PC-9 (cell line): ENCODE measurements at regions of chr19 and their contacts with region 1.

Region 1: DNA sequence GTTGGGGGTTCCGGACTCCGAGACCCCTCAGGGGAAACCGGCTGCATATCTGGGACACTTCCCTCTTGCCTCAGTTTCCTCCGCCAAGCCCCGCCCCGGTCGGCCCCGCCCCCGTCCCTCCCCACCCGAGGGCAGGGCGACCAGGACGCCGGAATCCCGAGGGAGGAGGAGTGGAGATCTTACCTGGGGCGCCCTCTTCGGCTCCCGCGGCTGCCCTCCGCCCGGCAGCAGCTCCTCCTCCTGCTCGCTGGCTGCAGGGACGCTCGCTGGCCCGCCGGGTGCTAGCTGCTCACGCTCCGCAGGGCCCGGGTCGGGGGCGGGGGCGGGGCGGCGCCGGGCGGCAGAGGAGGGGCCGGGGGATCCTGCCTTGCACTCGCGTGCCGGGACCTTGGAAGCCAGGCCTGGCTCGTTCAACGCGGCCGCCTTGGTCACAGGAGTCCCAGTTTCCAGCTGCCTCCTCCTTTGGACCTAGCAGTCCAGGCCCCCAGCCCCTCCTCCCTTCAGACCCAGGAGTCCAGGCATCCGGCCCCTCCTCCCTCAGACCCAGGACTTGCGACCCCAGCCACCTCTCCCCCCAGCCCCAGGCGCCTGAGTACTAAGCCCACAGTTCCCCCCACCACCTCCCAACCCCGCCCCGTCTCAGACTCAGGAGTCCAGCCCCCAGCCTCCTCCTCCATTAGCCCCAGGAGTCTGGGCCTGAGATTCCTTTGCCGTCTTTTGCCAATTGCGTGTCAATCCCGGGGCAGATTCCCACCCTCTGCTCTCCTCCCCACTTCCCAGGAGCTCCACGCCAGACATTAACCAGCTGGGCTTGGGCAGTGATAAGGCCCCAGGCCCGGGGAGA is at the start of gene NTF4:
- DNase-seq: peak in 1 of 2 experiments; percentile 75
- H3K4me3 ChIP-seq: peak within 1 kb of the TSS; percentile 35; the same call in 1 of the 2 replicates
- H3K27ac ChIP-seq: no peak within 1 kb of the TSS
- H3K4me1 ChIP-seq: peaks cover 11% of the 10 kb centered on the region; the same call in 1 of the 2 replicates
- H3K27me3 ChIP-seq: peaks cover 17% of the 10 kb centered on the region
- CTCF ChIP-seq: no peak
- total RNA-seq, gene NTF4: 14.0 and 18.6 TPM in 2 replicates

Region 2: GRCh38 chr19:49200238-49200862 is 135.4 kb after region 1 on chr19:
- CTCF ChIA-PET with region 1: no interaction called
- POLR2A ChIA-PET with region 1: interaction called, 13 read pairs
- intact Hi-C with region 1: no loop called
- DNase-seq: no peak
- H3K4me3 ChIP-seq: no peak overlapping the region
- H3K27ac ChIP-seq: no peak overlapping the region
- H3K4me1 ChIP-seq: peaks cover 38% of the 10 kb centered on the region
- H3K27me3 ChIP-seq: no peaks in the 10 kb centered on the region
- CTCF ChIP-seq: no peak